HepG2 (cell line): ENCODE measurements at regions of chr10 and their contacts with region 1.

Region 1: GRCh38 chr10:125419831-125420230 is 259.5 kb upstream of the CTBP2 start:
- DNase-seq: no peak
- ATAC-seq: no peak
- H3K4me3 ChIP-seq: no peak overlapping the region
- H3K27ac ChIP-seq: no peak overlapping the region
- H3K4me1 ChIP-seq: no peaks in the 10 kb centered on the region
- H3K27me3 ChIP-seq: peaks cover 3 to 27% of the 10 kb centered on the region in 2 experiments; a peak in 2 of 5 replicates
- CTCF ChIP-seq: no peak
- EP300 ChIP-seq: no peak
- POLR2A ChIP-seq: no peak
- RAD21 ChIP-seq: no peak

Region 2: DNA sequence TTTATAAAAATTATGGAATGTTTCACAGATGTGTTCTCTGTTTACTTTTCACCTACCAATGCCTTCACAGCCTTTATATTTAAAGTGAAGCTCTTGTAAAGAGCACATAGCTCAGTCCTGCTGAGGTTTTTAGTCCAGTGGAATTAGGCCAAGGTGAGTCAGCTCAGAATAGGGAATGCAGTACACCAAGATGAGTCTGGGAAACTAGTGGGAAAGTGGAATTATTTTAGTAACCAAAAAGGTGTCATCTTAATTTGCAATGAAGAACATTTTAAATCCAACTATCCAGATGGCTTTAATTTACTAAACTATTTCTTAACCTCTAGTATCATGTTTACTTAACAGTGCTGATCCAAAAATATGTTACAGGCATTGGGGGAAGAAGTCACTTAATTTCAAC is 23.2 kb before region 1 on chr10:
- CTCF ChIA-PET with region 1: no interaction called
- POLR2A ChIA-PET with region 1: no interaction called
- in situ Hi-C with region 1: no loop called
- intact Hi-C with region 1: loop called (anchors 1 kb)
- DNase-seq: no peak
- ATAC-seq: no peak
- H3K4me3 ChIP-seq: no peak overlapping the region
- H3K27ac ChIP-seq: no peak overlapping the region
- H3K4me1 ChIP-seq: no peaks in the 10 kb centered on the region
- H3K27me3 ChIP-seq: no peaks in the 10 kb centered on the region; a peak in 1 of 5 replicates
- CTCF ChIP-seq: no peak
- EP300 ChIP-seq: no peak
- POLR2A ChIP-seq: no peak
- RAD21 ChIP-seq: no peak